ENCODE measurements at regions of chr1 and their contacts with region 1.

Region 1: GRCh38 chr1:225999227-225999911 is at the start of gene SDE2:
- DNase-seq: peak; percentile 99 to 100 (median 100)
- H3K4me3 ChIP-seq: peak within 1 kb of the TSS; percentile 76 to 100 (median 97)
- H3K27ac ChIP-seq: peak within 1 kb of the TSS; percentile 99 to 100
- H3K4me1 ChIP-seq: peaks cover 67 to 84% (median 73%) of the 10 kb centered on the region in 4 experiments
- H3K27me3 ChIP-seq: no peaks in the 10 kb centered on the region

Region 2: DNA sequence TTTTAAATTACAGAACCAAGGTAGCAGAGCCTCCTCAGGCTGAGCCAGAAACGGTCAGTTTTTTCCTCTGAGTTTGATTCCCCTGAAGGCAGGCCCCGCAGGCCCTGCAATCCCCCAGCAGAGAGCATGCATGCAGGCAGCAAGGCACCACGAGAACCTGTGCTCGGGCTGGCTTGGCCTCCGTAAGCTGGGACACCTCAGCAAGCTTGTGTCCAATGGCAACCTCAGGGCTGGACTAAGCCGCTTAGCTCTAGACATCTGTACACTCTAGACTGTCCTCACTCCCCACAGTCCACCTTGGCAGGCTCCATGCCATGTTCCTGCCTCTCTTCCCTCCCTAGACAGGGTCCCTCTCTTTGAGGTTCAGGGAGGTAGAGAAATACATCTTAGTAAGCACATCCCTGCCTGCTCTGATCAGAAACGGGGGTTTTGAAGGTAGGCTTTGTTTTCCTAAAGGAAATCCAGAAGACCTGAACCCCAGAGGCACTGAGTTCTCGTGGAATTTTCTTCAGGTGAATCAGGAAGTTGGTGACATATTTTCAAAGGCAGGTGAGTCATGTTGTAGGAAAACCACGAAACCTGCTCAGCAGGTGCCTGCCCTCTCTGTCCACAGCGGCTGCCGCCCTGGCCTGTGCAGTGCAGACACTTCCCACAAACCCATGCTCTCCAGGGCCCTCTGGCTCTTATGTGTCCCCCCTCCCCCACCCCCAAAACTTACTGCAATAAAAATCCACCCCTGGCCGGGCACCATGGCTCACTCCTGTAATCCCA is 124.1 kb before region 1 on chr1:
- CTCF ChIA-PET with region 1: no interaction called
- POLR2A ChIA-PET with region 1: no interaction called
- DNase-seq: no peak
- H3K4me3 ChIP-seq: no peak overlapping the region
- H3K27ac ChIP-seq: no peak overlapping the region
- H3K4me1 ChIP-seq: peaks cover 0 to 32% (median 27%) of the 10 kb centered on the region in 4 experiments
- H3K27me3 ChIP-seq: no peaks in the 10 kb centered on the region

Region 3: GRCh38 chr1:225962440-225962975 is 36.9 kb before region 1 on chr1:
- CTCF ChIA-PET with region 1: no interaction called
- POLR2A ChIA-PET with region 1: no interaction called
- DNase-seq: peak; percentile 50 to 65 (median 63)
- H3K4me3 ChIP-seq: peak overlapping the region in 2 of 7 experiments; percentile 19 to 30
- H3K27ac ChIP-seq: no peak overlapping the region
- H3K4me1 ChIP-seq: peaks cover 0 to 5% (median 2%) of the 10 kb centered on the region in 4 experiments
- H3K27me3 ChIP-seq: no peaks in the 10 kb centered on the region

Region 4: DNA sequence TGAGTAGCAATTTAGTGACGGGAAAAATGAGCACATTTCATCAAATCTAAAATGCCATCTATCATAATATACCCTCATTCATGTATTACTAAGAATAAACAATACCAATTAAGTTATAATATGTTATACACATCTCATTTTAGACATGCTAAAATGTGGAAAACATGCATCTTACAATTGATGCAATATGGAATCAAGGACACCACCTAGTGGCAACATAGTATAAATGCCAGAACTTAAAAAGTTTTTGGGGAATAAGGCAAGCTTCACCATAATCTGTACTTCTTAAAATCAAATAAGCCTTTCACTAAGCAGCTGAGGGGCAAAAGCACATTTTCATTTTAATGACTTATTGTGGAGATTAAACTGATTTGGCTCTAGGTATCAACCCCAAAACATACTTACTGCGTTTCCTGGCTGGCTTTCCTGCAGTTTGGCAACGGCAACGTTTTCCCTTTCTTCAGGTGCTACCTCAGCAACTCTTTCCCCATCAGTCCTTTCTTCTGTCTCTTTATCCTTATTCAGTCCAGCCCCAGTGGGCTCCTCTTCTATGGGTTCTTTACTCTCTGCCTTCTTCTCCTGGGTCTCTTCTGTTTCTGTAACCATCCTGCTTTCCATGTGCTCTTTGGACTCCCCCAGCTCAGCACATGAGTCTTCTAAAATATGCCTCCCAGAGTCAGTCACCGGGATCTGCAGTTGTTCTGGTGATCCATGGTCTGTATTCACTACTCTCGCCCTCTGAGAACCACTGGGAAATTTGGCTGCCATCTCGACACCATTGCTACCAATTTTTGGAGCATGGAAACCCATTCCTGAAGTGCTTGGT is 11.7 kb before region 1 on chr1:
- CTCF ChIA-PET with region 1: interaction called, 76 read pairs
- POLR2A ChIA-PET with region 1: interaction called, 4 read pairs
- DNase-seq: peak; percentile 66 to 76 (median 74)
- H3K4me3 ChIP-seq: peak overlapping the region in 1 of 7 experiments; percentile 28
- H3K27ac ChIP-seq: no peak overlapping the region
- H3K4me1 ChIP-seq: peaks cover 0 to 4% (median 1%) of the 10 kb centered on the region in 4 experiments
- H3K27me3 ChIP-seq: no peaks in the 10 kb centered on the region

Region 5: DNA sequence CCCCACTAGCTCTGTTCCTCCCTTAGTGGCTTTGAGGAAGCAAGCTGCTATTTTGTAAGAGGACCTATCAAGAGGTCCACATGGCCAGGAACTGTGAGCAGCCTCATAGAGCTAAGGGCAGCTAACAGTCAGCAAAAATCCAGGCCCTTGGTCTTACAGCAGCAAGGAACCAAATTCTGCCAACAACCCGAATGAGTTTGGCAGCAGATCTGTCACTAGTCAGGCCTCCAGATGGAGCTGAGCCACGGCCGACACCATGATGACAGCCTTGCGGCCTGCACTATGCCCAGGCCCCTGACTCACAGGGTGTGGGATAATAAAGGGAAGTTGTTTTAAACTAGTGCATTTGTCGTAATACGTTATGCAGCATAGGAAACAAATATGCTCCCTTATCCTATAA is 35.1 kb after region 1 on chr1:
- CTCF ChIA-PET with region 1: interaction called, 31 read pairs
- POLR2A ChIA-PET with region 1: interaction called, 9 read pairs
- DNase-seq: peak; percentile 97 to 100 (median 99)
- H3K4me3 ChIP-seq: peak overlapping the region in 1 of 7 experiments; percentile 13
- H3K27ac ChIP-seq: peak overlapping the region in 1 of 2 experiments; percentile 51
- H3K4me1 ChIP-seq: peaks cover 19 to 47% (median 25%) of the 10 kb centered on the region in 4 experiments
- H3K27me3 ChIP-seq: no peaks in the 10 kb centered on the region

Measured in common myeloid progenitor, CD34-positive (primary cell).